CD4-positive, alpha-beta T cell (primary cell): ENCODE measurements at regions of chr17 and their contacts with region 1.

Region 1: DNA sequence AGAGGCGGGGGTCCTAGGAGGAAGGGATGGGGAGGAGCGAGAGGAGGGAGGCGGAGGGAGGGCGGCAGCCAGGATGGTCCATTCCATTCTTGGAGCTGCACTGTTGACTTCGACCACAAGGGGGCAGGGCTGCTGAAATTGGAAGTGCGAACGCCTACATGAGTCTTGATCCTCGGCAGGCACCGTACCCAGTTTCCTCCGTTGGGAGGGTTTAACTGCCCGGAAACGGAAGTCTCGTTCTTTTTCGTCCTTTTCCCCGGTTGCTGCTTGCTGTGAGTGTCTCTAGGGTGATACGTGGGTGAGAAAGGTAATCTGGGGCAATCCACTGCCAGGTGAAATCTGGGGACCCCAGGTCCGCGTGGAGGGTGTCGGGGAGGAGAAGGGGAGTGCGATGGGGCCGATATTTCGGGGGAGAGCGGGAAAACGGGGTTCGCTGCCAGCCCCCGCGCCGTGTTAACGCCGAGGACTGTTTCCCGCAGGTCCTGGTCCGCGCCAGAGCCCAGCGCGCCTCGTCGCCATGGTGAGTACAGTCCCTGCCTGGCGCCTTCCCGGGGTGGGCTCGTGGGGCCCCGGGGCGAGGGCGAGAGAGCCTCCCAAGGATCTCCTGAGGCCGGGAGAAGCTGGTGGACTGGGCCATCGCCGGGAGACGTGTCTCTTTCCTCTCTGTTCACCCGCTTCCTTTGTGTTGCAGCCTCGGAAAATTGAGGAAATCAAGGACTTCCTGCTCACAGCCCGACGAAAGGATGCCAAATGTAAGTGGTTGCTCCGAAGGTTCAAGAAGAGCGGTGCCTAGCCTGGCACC is at the start of gene RPL38:
- DNase-seq: peak; percentile 88 to 97 (median 95)
- ATAC-seq: peak; percentile 85
- H3K4me3 ChIP-seq: peak within 1 kb of the TSS; percentile 97
- H3K4me3 Mint-ChIP-seq: peak within 1 kb of the TSS; percentile 94
- H3K27ac ChIP-seq: peak within 1 kb of the TSS; percentile 69 to 87
- H3K27ac Mint-ChIP-seq: peak within 1 kb of the TSS; percentile 82
- H3K4me1 ChIP-seq: peaks cover 59% of the 10 kb centered on the region
- H3K4me1 Mint-ChIP-seq: peaks cover 44% of the 10 kb centered on the region
- H3K27me3 ChIP-seq: peaks cover 18 to 24% of the 10 kb centered on the region in 2 experiments
- H3K27me3 Mint-ChIP-seq: peaks cover 16% of the 10 kb centered on the region
- CTCF ChIP-seq: peak; percentile 89
- total RNA-seq, gene RPL38: 2,305 to 2,531 TPM

Region 2: DNA sequence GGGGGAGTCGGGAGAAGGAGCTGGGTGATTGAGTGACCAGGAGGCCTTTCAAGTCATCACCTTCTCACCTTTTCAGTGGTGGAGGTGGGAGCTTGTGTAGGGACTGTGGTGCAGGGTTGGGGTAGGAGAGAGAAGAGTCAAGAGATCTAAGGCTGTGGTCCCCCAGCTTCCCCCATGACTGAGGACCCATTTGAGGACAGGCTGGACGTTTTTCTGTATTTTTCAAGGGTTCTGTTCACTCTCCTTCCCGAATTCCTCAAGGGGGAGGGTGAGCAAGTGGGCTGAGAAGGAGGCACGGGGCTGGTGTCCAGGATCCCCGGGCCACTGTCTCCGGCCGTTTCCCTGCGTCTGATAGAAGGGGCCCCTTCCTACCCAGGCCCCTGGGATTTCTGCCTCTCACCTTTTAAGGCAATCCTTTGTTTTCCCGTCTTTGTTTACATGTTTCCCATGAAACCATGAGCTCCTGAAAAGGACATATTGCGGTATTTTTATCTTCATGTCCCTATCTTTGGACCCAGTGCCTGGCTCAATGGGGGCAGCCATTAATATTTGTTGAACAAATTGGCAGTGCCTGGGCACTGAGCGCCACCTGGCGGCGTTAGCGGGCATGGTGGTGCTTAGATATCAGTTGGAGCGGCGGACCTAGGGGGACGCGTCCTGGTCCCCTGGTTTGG is 253.6 kb after region 1 on chr17:
- CTCF ChIA-PET with region 1: no interaction called
- POLR2A ChIA-PET with region 1: no interaction called
- intact Hi-C with region 1: loop called (anchors 2 kb)
- DNase-seq: peak; percentile 45 to 86 (median 67)
- ATAC-seq: peak; percentile 60
- H3K4me3 ChIP-seq: no peak overlapping the region
- H3K4me3 Mint-ChIP-seq: peak overlapping the region; percentile 51
- H3K27ac ChIP-seq: no peak overlapping the region
- H3K27ac Mint-ChIP-seq: no peak overlapping the region
- H3K4me1 ChIP-seq: peaks cover 68% of the 10 kb centered on the region
- H3K4me1 Mint-ChIP-seq: peaks cover 27% of the 10 kb centered on the region
- H3K27me3 ChIP-seq: peaks cover 0 to 3% of the 10 kb centered on the region in 2 experiments
- H3K27me3 Mint-ChIP-seq: peaks cover 6% of the 10 kb centered on the region
- CTCF ChIP-seq: peak; percentile 83